ENCODE measurements at regions of chr4 and their contacts with region 1.

Region 1: GRCh38 chr4:114807759-114808404 is 209.3 kb downstream of the UGT8 start:
- DNase-seq: peak; percentile 43
- CTCF ChIP-seq: peak; percentile 93

Region 2: GRCh38 chr4:114791976-114792375 is 15.9 kb before region 1 on chr4:
- CTCF ChIA-PET with region 1: interaction called, 39 read pairs
- POLR2A ChIA-PET with region 1: no interaction called
- DNase-seq: no peak
- CTCF ChIP-seq: no peak

Region 3: GRCh38 chr4:114827651-114828050 is 19.8 kb after region 1 on chr4:
- CTCF ChIA-PET with region 1: interaction called, 15 read pairs
- POLR2A ChIA-PET with region 1: no interaction called
- DNase-seq: no peak
- CTCF ChIP-seq: no peak

Region 4: GRCh38 chr4:114839986-114840385 is 32.1 kb after region 1 on chr4:
- CTCF ChIA-PET with region 1: interaction called, 11 read pairs
- POLR2A ChIA-PET with region 1: no interaction called
- DNase-seq: no peak
- CTCF ChIP-seq: no peak

Measured in GM10248 (cell line).